ENCODE measurements at regions of chr7 and their contacts with region 1.

Region 1: GRCh38 chr7:151008511-151009323 is 15.6 kb downstream of the ATG9B start:
- DNase-seq: peak; percentile 82
- H3K4me3 Mint-ChIP-seq: peak overlapping the region; percentile 71
- H3K27ac Mint-ChIP-seq: peak overlapping the region; percentile 82
- H3K4me1 Mint-ChIP-seq: peaks cover 57% of the 10 kb centered on the region
- H3K27me3 Mint-ChIP-seq: no peaks in the 10 kb centered on the region

Region 2: GRCh38 chr7:150994141-150994964 is 14.4 kb before region 1 on chr7:
- CTCF ChIA-PET with region 1: interaction called, 15 read pairs
- POLR2A ChIA-PET with region 1: interaction called, 8 read pairs
- intact Hi-C with region 1: loop called (anchors 2 kb)
- DNase-seq: no peak
- H3K4me3 Mint-ChIP-seq: peak overlapping the region; percentile 35
- H3K27ac Mint-ChIP-seq: peak overlapping the region; percentile 38
- H3K4me1 Mint-ChIP-seq: peaks cover 35% of the 10 kb centered on the region
- H3K27me3 Mint-ChIP-seq: no peaks in the 10 kb centered on the region

Region 3: GRCh38 chr7:151152643-151153513 is 144.2 kb after region 1 on chr7:
- CTCF ChIA-PET with region 1: no interaction called
- POLR2A ChIA-PET with region 1: no interaction called
- intact Hi-C with region 1: no loop called
- DNase-seq: no peak
- H3K4me3 Mint-ChIP-seq: no peak overlapping the region
- H3K27ac Mint-ChIP-seq: no peak overlapping the region
- H3K4me1 Mint-ChIP-seq: no peaks in the 10 kb centered on the region
- H3K27me3 Mint-ChIP-seq: peaks cover 17% of the 10 kb centered on the region

Region 4: DNA sequence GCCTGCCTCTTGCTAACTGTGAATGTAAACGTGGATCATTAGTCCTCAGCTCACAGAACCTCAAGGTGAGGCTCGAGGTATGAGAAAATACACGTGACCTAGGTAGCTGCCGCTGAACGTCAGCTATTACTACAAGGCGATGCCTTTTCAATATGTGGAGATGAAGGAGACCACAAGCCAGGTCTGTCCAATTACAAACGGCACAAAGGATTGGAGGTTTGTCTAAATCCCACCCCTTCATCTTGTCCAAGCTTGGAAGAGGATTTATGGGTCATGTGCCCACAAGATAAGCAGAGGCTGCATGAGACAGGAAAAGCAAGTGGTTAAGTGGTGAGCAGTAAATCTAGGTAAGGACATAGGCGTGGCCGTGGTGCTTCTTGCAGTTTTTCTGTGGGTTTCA is 198.2 kb after region 1 on chr7:
- CTCF ChIA-PET with region 1: no interaction called
- POLR2A ChIA-PET with region 1: no interaction called
- intact Hi-C with region 1: no loop called
- DNase-seq: no peak
- H3K4me3 Mint-ChIP-seq: no peak overlapping the region
- H3K27ac Mint-ChIP-seq: no peak overlapping the region
- H3K4me1 Mint-ChIP-seq: peaks cover 26% of the 10 kb centered on the region
- H3K27me3 Mint-ChIP-seq: no peaks in the 10 kb centered on the region

Measured in activated CD4-positive, alpha-beta memory T cell treated with anti-CD3 and anti-CD28 coated beads for 36 hours (primary cell).